Mammary epithelial cell (primary cell): ENCODE measurements at regions of chr6 and their contacts with region 1.

Region 1: GRCh38 chr6:31712296-31712695 is 2.9 kb upstream of the LY6G6D start:
- DNase-seq: no peak
- H3K4me3 ChIP-seq: no peak overlapping the region
- H3K27ac ChIP-seq: no peak overlapping the region
- H3K4me1 ChIP-seq: peaks cover 11% of the 10 kb centered on the region
- H3K27me3 ChIP-seq: no peaks in the 10 kb centered on the region
- CTCF ChIP-seq: peak; percentile 24 to 59

Region 2: DNA sequence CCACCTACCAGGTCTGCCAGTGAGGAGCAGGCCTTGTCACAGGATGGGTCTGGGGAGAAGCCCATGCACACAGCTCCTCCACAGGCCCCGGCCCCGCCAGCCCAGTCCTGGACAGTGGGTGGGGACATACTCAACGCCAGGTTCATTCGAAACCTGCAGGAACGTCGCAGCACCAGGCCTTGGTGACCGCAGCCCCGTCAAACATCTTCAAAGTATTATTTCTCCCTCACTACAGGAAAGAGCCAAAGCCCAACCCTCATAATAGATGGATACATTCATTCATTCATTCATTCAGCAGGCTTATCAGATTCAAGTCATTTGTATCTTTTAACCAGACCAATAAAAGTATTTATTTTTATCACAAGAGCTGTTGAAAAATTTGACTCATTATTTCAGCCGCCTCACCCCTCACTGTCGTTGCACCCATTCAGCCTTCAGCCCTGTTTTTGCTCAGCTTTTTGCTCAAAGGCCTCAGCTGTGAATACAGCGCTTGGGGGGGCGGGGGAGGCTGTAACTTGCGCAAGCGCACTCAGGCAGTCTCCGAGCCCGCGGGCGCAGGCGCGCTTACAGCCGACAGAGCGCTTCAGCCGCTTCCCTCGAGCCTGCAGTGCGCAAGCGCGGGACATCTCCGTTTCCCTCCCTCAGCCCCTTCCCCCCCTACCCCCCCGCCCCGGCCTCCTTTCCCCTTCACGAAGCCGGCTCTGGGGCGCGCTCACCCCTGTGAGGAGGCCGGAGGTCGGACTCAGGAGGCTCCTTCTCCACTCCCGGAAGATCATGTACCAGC is 1065.6 kb before region 1 on chr6 and contains the start of gene C6orf136:
- CTCF ChIA-PET with region 1: no interaction called
- dilution Hi-C with region 1: no loop called
- in situ Hi-C with region 1: no loop called
- intact Hi-C with region 1: no loop called
- DNase-seq: peak; percentile 83
- H3K4me3 ChIP-seq: peak within 1 kb of the TSS; percentile 81 to 100 (median 97)
- H3K27ac ChIP-seq: peak within 1 kb of the TSS; percentile 69
- H3K4me1 ChIP-seq: peaks cover 14% of the 10 kb centered on the region
- H3K27me3 ChIP-seq: no peaks in the 10 kb centered on the region
- CTCF ChIP-seq: no peak
- total RNA-seq, gene C6orf136: 1.8 to 11.2 TPM

Region 3: DNA sequence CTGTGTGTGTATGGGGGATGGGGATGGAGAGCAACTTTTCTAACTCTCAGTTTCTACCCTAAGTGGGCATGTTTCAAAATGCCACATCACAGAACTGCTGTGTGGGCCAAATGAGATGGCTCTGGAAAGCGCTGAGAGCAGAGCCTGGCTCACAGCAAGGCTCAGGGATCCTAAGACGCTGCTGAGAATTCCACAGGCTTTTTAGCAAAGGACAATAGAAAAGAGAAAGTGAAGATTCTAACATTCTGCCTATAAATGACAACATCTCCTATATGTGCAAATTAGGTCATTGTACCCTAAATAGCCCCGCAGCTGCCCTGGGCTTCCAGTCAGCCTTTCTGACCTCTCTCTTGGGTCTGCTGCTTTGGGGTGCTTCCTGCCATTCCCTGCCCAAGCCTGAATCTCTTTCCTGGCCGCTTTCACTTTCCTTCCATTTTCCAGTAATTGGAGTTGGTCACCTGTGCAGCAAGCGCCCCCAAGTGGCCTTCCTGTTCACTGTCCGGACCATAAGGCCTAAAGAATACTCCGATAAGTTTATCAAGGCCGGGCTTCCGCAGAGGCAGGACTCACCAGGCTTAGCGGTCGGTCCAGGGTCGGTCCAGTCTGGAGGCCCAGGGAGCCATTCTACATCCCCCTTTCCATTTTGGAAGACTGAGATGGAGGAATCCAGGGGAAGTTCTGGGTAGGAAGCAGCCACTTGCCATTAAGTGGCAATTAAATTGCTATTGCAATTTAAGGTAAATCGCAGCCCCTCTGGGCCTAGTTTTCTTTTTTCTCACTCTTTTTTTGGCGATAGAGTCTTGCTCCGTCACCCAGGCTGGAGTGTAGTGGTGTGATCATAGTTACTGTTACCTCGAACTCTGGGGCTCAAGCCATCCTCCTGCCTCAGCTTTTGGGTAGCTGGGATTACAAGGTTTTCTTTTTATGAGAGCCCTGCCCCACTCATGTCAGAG is 834.6 kb before region 1 on chr6:
- CTCF ChIA-PET with region 1: no interaction called
- dilution Hi-C with region 1: no loop called
- in situ Hi-C with region 1: no loop called
- intact Hi-C with region 1: no loop called
- DNase-seq: peak; percentile 80
- H3K4me3 ChIP-seq: peak overlapping the region in 2 of 3 experiments; percentile 13 to 20
- H3K27ac ChIP-seq: peak overlapping the region; percentile 63
- H3K4me1 ChIP-seq: peaks cover 37% of the 10 kb centered on the region
- H3K27me3 ChIP-seq: no peaks in the 10 kb centered on the region
- CTCF ChIP-seq: peak; percentile 92 to 96

Region 4: GRCh38 chr6:31626952-31627351 is 85.3 kb before region 1 on chr6:
- CTCF ChIA-PET with region 1: no interaction called
- dilution Hi-C with region 1: loop called (anchors 5 kb)
- in situ Hi-C with region 1: no loop called
- intact Hi-C with region 1: no loop called
- DNase-seq: no peak
- H3K4me3 ChIP-seq: no peak overlapping the region
- H3K27ac ChIP-seq: no peak overlapping the region
- H3K4me1 ChIP-seq: peaks cover 12% of the 10 kb centered on the region
- H3K27me3 ChIP-seq: no peaks in the 10 kb centered on the region
- CTCF ChIP-seq: no peak

Region 5: DNA sequence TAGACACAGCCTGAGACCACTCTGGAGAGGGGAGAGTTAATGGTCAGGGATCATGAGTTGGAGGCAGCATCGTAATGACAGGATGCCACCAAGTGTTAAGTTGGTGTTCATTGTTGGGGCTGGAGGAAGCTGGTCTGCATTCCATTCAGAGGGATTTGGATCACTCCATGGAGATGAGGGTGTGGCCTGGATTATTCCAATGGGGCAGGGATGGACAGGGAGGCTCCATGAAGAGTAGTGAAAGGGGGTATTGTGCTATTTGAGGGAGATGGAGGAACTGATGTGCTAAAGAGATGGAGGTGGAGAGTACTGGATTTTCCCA is 51.3 kb after region 1 on chr6:
- CTCF ChIA-PET with region 1: no interaction called
- dilution Hi-C with region 1: loop called (anchors 5 kb)
- in situ Hi-C with region 1: no loop called
- intact Hi-C with region 1: no loop called
- DNase-seq: peak; percentile 33
- H3K4me3 ChIP-seq: no peak overlapping the region
- H3K27ac ChIP-seq: no peak overlapping the region
- H3K4me1 ChIP-seq: peaks cover 12% of the 10 kb centered on the region
- H3K27me3 ChIP-seq: no peaks in the 10 kb centered on the region
- CTCF ChIP-seq: no peak